Vagina (tissue), 2 donors: ENCODE measurements at regions of chr10 and their contacts with region 1.

Region 1: GRCh38 chr10:74262856-74263255 is 111.8 kb downstream of the ADK start:
- DNase-seq: no peak
- H3K4me3 ChIP-seq: no peak overlapping the region
- H3K27ac ChIP-seq: no peak overlapping the region
- H3K4me1 ChIP-seq: no peaks in the 10 kb centered on the region
- H3K27me3 ChIP-seq: no peaks in the 10 kb centered on the region
- CTCF ChIP-seq: no peak
- POLR2A ChIP-seq: no peak

Region 2: GRCh38 chr10:74363727-74364126 is 100.9 kb after region 1 on chr10:
- intact Hi-C with region 1: no loop called
- DNase-seq: no peak
- H3K4me3 ChIP-seq: no peak overlapping the region
- H3K27ac ChIP-seq: no peak overlapping the region
- H3K4me1 ChIP-seq: no peaks in the 10 kb centered on the region
- H3K27me3 ChIP-seq: no peaks in the 10 kb centered on the region
- CTCF ChIP-seq: no peak
- POLR2A ChIP-seq: no peak

Region 3: DNA sequence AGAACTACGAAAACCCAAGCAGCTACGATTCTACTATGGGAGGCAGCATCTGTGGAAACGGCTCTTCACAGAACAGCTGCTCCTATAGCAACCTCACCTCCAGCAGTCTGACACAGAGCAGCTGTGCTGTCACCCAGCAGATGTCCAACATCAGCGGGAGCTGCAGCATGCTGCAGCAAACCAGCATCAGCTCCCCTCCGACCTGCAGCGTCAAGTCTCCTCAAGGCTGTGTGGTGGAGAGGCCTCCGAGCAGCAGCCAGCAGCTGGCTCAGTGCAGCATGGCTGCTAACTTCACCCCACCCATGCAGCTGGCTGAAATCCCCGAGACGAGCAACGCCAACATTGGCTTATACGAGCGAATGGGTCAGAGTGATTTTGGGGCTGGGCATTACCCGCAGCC is 767.0 kb after region 1 on chr10:
- intact Hi-C with region 1: loop called (anchors 10 kb)
- DNase-seq: peak in 1 of 2 donors; percentile 70
- H3K4me3 ChIP-seq: no peak overlapping the region
- H3K27ac ChIP-seq: no peak overlapping the region
- H3K4me1 ChIP-seq: no peaks in the 10 kb centered on the region
- H3K27me3 ChIP-seq: no peaks in the 10 kb centered on the region
- CTCF ChIP-seq: no peak
- POLR2A ChIP-seq: no peak

Region 4: GRCh38 chr10:75099952-75100763 is 837.3 kb after region 1 on chr10:
- intact Hi-C with region 1: loop called (anchors 5 kb)
- DNase-seq: no peak
- H3K4me3 ChIP-seq: no peak overlapping the region
- H3K27ac ChIP-seq: peak overlapping the region; percentile 66
- H3K4me1 ChIP-seq: peaks cover 14% of the 10 kb centered on the region
- H3K27me3 ChIP-seq: no peaks in the 10 kb centered on the region
- CTCF ChIP-seq: peak; percentile 98 to 99 (median 98)
- POLR2A ChIP-seq: no peak

Region 5: DNA sequence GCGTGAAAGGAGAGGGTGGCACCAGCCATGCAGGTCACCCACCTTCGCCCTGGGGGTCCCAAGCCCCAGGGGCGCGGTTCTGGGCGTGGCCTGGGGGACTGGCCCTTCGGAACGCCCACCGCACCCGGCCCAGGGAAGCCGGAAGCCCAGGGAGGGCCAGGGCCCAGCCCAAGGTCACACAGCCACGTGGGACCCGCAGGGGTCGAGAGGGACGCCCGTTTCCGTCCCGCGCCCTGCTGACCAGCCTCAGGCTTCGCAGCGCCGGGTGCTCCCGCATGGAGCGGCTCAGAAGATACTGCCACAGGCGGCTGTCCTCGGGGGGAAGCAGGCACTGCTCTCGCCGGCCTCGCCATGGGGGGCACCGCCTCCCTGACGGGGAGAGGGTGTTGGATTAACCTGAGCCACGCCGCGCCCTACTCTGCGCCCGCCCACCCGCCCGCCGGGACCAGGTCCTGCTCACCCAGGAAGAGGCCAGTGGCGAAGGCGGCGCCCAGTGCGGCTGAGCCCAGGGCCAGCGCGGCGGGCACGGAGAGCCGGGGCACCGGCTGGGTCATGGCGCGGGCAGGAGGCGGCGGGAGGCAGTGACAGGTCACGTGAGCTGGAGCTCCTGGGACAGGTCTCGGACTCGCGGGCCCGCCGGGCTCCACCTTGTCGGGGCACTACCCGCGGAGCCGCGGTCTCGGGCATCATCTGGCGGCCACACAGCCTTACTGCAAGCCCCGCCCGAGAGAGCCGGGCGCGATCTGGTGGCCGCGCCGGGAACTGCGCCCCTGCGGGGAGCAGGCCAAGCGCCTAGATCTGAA is 972.7 kb after region 1 on chr10 and contains the start of gene COMTD1:
- intact Hi-C with region 1: loop called (anchors 10 kb)
- DNase-seq: no peak
- H3K4me3 ChIP-seq: peak within 1 kb of the TSS; percentile 60 to 96
- H3K27ac ChIP-seq: peak within 1 kb of the TSS; percentile 94
- H3K4me1 ChIP-seq: peaks cover 15% of the 10 kb centered on the region
- H3K27me3 ChIP-seq: no peaks in the 10 kb centered on the region
- CTCF ChIP-seq: peak; percentile 100
- POLR2A ChIP-seq: no peak
- total RNA-seq, gene COMTD1: 80.0 TPM